Activated CD8-positive, alpha-beta memory T cell treated with anti-CD3 and anti-CD28 coated beads, Interleukin-2, amount 10 ng/mL, durations not matched to agents 7 days and 5 days (primary cell): ENCODE measurements at regions of chr13 and their contacts with region 1.

Region 1: GRCh38 chr13:77599351-77599750 is 63.8 kb downstream of the SCEL start:
- DNase-seq: no peak
- ATAC-seq: no peak
- H3K4me3 Mint-ChIP-seq: no peak overlapping the region
- H3K27ac Mint-ChIP-seq: no peak overlapping the region
- H3K4me1 Mint-ChIP-seq: no peaks in the 10 kb centered on the region
- H3K27me3 Mint-ChIP-seq: peaks cover 28% of the 10 kb centered on the region

Region 2: DNA sequence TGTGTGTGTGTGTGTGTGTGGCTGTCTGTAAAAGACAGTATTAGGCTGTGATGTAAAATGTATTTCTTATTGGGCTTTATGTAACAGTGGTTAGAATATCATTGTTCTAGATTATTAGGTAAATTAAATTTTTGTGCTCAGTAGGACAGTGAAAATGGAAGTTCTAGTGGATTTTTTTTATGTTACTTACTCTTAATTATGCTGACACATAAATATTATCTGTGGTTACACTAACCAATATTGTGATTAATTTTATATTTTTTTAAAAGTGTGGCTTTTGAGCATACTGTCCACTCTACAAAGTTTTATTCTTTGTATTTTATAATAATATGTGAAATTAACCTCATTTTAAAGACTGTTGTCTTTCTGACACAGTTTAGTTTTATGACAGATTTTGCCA is 16.7 kb after region 1 on chr13:
- CTCF ChIA-PET with region 1: no interaction called
- DNase-seq: no peak
- ATAC-seq: no peak
- H3K4me3 Mint-ChIP-seq: no peak overlapping the region
- H3K27ac Mint-ChIP-seq: no peak overlapping the region
- H3K4me1 Mint-ChIP-seq: no peaks in the 10 kb centered on the region
- H3K27me3 Mint-ChIP-seq: peaks cover 27% of the 10 kb centered on the region

Region 3: GRCh38 chr13:77751513-77752456 is 152.4 kb after region 1 on chr13:
- CTCF ChIA-PET with region 1: interaction called, 17 read pairs
- DNase-seq: peak; percentile 67
- ATAC-seq: peak; percentile 79
- H3K4me3 Mint-ChIP-seq: no peak overlapping the region
- H3K27ac Mint-ChIP-seq: peak overlapping the region; percentile 9
- H3K4me1 Mint-ChIP-seq: peaks cover 10% of the 10 kb centered on the region
- H3K27me3 Mint-ChIP-seq: no peaks in the 10 kb centered on the region